ENCODE measurements at regions of chr10 and their contacts with region 1.

Region 1: GRCh38 chr10:24711465-24711864 is 12.2 kb downstream of the ARHGAP21 start:
- DNase-seq: no peak
- H3K4me3 Mint-ChIP-seq: no peak overlapping the region
- H3K27ac Mint-ChIP-seq: no peak overlapping the region
- H3K4me1 Mint-ChIP-seq: peaks cover 4% of the 10 kb centered on the region
- H3K27me3 Mint-ChIP-seq: no peaks in the 10 kb centered on the region

Region 2: DNA sequence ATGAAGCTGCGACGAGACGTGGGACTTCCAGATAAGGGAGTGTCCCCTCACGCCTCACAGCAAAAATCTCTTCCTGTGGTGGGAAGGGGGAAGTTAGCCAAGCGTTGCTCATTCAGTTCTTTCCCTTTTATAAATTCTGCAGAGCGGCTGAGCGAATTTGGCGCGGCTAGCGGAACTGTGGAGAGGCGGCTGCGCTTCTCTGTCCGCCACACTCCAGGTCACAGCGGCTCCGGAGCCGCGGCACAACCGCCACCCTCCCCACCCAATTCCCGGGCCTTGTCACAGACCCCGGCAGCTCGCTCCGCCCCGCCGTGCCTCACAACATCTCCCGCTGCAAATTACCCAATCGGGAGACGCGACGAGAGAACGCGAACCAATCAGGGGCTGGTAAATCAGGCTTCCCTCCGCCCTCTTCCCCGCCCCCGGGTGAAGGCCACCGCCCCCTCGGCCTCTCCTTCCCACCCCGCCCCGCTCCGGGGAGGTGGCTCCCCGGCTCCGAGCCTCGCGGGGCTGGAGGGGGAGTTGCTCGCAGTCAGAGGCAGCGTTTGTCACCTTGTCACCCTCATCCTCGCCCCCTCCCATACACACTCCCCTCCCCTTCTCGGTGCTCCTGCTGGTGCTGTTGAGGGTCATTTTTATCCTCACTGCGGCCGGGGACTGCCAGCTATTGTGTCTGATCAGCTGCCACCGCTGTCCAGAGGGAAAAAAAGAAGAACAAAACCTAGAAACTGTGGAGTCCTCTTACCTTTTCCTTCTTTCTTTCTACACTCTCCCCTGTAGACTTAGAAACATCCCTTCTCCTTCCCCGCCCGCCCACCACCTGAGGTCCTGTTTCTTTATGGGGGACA is 13.1 kb after region 1 on chr10:
- CTCF ChIA-PET with region 1: interaction called, 13 read pairs
- POLR2A ChIA-PET with region 1: no interaction called
- DNase-seq: peak; percentile 96
- H3K4me3 Mint-ChIP-seq: peak overlapping the region; percentile 89
- H3K27ac Mint-ChIP-seq: peak overlapping the region; percentile 95
- H3K4me1 Mint-ChIP-seq: peaks cover 28% of the 10 kb centered on the region
- H3K27me3 Mint-ChIP-seq: peaks cover 3% of the 10 kb centered on the region

Region 3: GRCh38 chr10:25026463-25026862 is 315.0 kb after region 1 on chr10:
- CTCF ChIA-PET with region 1: no interaction called
- POLR2A ChIA-PET with region 1: no interaction called
- DNase-seq: no peak
- H3K4me3 Mint-ChIP-seq: no peak overlapping the region
- H3K27ac Mint-ChIP-seq: no peak overlapping the region
- H3K4me1 Mint-ChIP-seq: no peaks in the 10 kb centered on the region
- H3K27me3 Mint-ChIP-seq: no peaks in the 10 kb centered on the region